Transverse colon (tissue), 4 donors: ENCODE measurements at regions of chr2 and their contacts with region 1.

Region 1: DNA sequence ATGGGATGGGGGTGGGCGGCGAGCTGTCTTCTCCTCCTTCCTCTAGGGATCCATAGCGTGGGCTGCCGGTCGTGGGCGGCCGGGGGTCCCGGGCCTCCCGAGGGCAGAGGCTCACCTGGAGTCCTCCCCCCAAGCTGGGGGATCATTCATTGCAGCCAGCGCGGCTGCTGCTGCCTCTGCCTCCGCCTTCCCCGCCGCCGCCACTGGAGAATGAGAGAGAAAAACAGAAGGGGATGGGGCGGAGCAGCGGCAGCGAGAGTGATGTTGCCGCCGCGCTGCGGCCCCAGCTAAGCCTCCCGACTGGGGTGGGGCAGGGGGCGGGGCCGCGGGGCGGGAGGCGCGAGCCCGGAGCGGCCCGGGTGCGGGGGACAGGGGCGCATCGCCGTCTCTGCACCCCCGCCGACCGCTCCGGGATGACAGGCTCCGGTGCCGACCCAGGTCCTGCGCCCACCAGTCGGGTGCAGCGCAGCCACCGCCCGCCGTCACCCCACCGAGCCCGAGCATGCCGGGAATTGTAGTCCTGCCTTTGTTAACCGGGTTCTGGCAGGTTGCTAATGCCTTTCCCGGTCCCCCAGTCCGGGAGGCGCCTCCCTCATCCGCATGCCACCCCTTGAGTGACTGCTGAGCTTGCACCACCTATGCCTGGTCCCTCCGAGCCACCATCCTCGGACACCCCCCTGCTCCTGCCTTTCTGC is at the start of gene KIF3C:
- DNase-seq: peak; percentile 66
- H3K4me3 ChIP-seq: peak within 1 kb of the TSS; percentile 37 to 84 (median 62)
- H3K27ac ChIP-seq: peak within 1 kb of the TSS; percentile 64 to 80 (median 70)
- H3K4me1 ChIP-seq: peaks cover 5 to 15% (median 10%) of the 10 kb centered on the region in 4 donors
- H3K27me3 ChIP-seq: no peaks in the 10 kb centered on the region
- CTCF ChIP-seq: no peak
- EP300 ChIP-seq: no peak
- POLR2A ChIP-seq: no peak
- total RNA-seq, gene KIF3C: 0.37 to 3.2 (median 2.0) TPM

Region 2: GRCh38 chr2:26008822-26009566 is 26.6 kb after region 1 on chr2:
- in situ Hi-C with region 1: no loop called
- intact Hi-C with region 1: loop called (anchors 1 kb)
- DNase-seq: peak; percentile 72
- H3K4me3 ChIP-seq: no peak overlapping the region
- H3K27ac ChIP-seq: peak overlapping the region; percentile 48 to 69 (median 60)
- H3K4me1 ChIP-seq: peaks cover 0 to 27% (median 17%) of the 10 kb centered on the region in 4 donors
- H3K27me3 ChIP-seq: no peaks in the 10 kb centered on the region
- CTCF ChIP-seq: no peak
- EP300 ChIP-seq: no peak
- POLR2A ChIP-seq: no peak